ENCODE measurements at regions of chr1 and their contacts with region 1.

Region 1: DNA sequence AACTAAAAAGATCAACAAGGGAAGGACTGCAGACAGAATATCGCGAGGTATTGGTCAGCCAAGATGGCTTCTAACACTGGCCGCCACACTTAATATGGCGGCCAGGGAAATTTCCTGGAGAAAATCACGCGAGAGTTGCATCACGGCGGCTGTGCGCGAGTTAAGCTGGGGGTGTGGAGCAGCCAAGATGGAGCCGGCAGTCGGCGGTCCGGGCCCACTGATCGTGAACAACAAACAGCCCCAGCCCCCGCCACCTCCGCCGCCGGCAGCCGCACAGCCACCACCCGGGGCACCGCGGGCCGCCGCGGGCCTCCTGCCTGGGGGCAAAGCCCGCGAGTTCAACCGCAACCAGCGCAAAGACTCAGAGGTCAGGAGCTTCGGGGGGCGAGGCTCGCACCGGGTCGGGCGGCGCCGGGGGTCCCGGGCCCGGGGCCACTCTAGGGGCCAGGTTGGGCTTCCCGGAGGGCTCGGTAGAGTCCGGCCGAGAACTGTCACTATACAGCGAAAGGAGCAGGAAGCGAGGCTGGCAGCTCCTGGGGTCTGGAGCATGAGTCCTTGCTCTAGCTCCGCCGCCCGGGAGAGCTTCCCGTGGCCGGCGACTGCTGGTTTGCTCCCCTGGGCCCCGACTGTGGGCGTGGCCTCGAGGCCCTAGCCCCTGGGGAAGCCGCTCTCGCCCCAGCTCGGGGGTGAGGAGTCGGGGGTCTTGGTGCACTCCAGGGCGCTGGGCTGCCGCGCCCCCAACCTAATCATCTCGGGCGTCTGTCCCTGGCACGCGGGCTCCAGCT is at the start of gene STRIP1:
- DNase-seq: peak; percentile 88 to 96 (median 93)
- H3K4me3 ChIP-seq: peak within 1 kb of the TSS; percentile 64
- H3K4me3 Mint-ChIP-seq: peak within 1 kb of the TSS; percentile 92 to 99 (median 94)
- H3K27ac ChIP-seq: peak within 1 kb of the TSS; percentile 90
- H3K27ac Mint-ChIP-seq: peak within 1 kb of the TSS; percentile 87 to 98 (median 94)
- H3K4me1 ChIP-seq: peaks cover 42% of the 10 kb centered on the region
- H3K4me1 Mint-ChIP-seq: peaks cover 53 to 68% (median 56%) of the 10 kb centered on the region in 3 donors
- H3K27me3 ChIP-seq: no peaks in the 10 kb centered on the region
- H3K27me3 Mint-ChIP-seq: no peaks in the 10 kb centered on the region
- total RNA-seq, gene STRIP1: 35.1 to 37.3 TPM

Region 2: GRCh38 chr1:109579491-109579890 is 455.2 kb before region 1 on chr1:
- CTCF ChIA-PET with region 1: no interaction called
- POLR2A ChIA-PET with region 1: interaction called, 11 read pairs
- DNase-seq: no peak
- H3K4me3 ChIP-seq: no peak overlapping the region
- H3K4me3 Mint-ChIP-seq: no peak overlapping the region
- H3K27ac ChIP-seq: no peak overlapping the region
- H3K27ac Mint-ChIP-seq: peak overlapping the region in 1 of 8 donors; percentile 30
- H3K4me1 ChIP-seq: no peaks in the 10 kb centered on the region
- H3K4me1 Mint-ChIP-seq: peaks cover 0 to 8% (median 5%) of the 10 kb centered on the region in 3 donors
- H3K27me3 ChIP-seq: no peaks in the 10 kb centered on the region
- H3K27me3 Mint-ChIP-seq: no peaks in the 10 kb centered on the region

Region 3: DNA sequence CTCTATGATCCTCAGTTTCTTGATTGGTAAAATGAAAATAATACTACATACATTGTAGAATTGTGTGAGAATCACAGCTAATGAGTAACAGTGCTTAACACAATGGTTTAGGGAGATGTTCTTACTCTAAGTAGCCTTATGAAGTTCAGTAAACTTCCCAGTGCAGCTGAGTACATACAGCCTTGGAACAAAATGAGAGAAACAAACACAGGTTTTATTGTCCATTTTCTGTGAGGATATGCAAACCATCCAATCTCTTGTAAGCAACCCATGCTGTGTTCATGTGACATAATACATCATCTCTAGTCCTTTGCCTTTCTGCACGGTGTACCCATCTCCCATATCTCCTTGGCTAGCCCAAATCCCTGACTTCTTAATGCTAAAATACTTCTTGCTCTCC is 14.9 kb before region 1 on chr1:
- CTCF ChIA-PET with region 1: interaction called, 27 read pairs
- POLR2A ChIA-PET with region 1: interaction called, 4 read pairs
- DNase-seq: no peak
- H3K4me3 ChIP-seq: no peak overlapping the region
- H3K4me3 Mint-ChIP-seq: no peak overlapping the region
- H3K27ac ChIP-seq: no peak overlapping the region
- H3K27ac Mint-ChIP-seq: peak overlapping the region in 1 of 8 donors; percentile 8
- H3K4me1 ChIP-seq: no peaks in the 10 kb centered on the region
- H3K4me1 Mint-ChIP-seq: no peaks in the 10 kb centered on the region
- H3K27me3 ChIP-seq: no peaks in the 10 kb centered on the region
- H3K27me3 Mint-ChIP-seq: no peaks in the 10 kb centered on the region

Region 4: GRCh38 chr1:110053557-110054428 is 19.1 kb after region 1 on chr1:
- CTCF ChIA-PET with region 1: interaction called, 14 read pairs
- POLR2A ChIA-PET with region 1: no interaction called
- DNase-seq: peak; percentile 39 to 70 (median 57)
- H3K4me3 ChIP-seq: no peak overlapping the region
- H3K4me3 Mint-ChIP-seq: no peak overlapping the region
- H3K27ac ChIP-seq: no peak overlapping the region
- H3K27ac Mint-ChIP-seq: peak overlapping the region in 4 of 8 donors; percentile 24 to 72 (median 41)
- H3K4me1 ChIP-seq: no peaks in the 10 kb centered on the region
- H3K4me1 Mint-ChIP-seq: peaks cover 0 to 5% (median 1%) of the 10 kb centered on the region in 3 donors
- H3K27me3 ChIP-seq: no peaks in the 10 kb centered on the region
- H3K27me3 Mint-ChIP-seq: peaks cover 0 to 2% of the 10 kb centered on the region in 2 donors

Region 5: GRCh38 chr1:110060034-110060661 is 25.5 kb after region 1 on chr1:
- CTCF ChIA-PET with region 1: interaction called, 15 read pairs
- POLR2A ChIA-PET with region 1: no interaction called
- DNase-seq: peak; percentile 45 to 82 (median 62)
- H3K4me3 ChIP-seq: no peak overlapping the region
- H3K4me3 Mint-ChIP-seq: no peak overlapping the region
- H3K27ac ChIP-seq: no peak overlapping the region
- H3K27ac Mint-ChIP-seq: peak overlapping the region in 1 of 8 donors; percentile 80
- H3K4me1 ChIP-seq: no peaks in the 10 kb centered on the region
- H3K4me1 Mint-ChIP-seq: peaks cover 0 to 6% (median 5%) of the 10 kb centered on the region in 3 donors
- H3K27me3 ChIP-seq: no peaks in the 10 kb centered on the region
- H3K27me3 Mint-ChIP-seq: peaks cover 0 to 2% of the 10 kb centered on the region in 2 donors

Measured in CD8-positive, alpha-beta memory T cell (primary cell).